ENCODE measurements at regions of chr2 and their contacts with region 1.

Region 1: GRCh38 chr2:54052825-54053718 is 62.3 kb upstream of the ACYP2 start:
- DNase-seq: peak; percentile 42
- H3K4me3 ChIP-seq: no peak overlapping the region
- H3K27ac ChIP-seq: no peak overlapping the region
- H3K4me1 ChIP-seq: peaks cover 8% of the 10 kb centered on the region
- H3K27me3 ChIP-seq: no peaks in the 10 kb centered on the region
- CTCF ChIP-seq: peak; percentile 36 to 45

Region 2: GRCh38 chr2:53786705-53787612 is 266.1 kb before region 1 on chr2 and contains the starts of genes ASB3 and ERLEC1:
- CTCF ChIA-PET with region 1: no interaction called
- dilution Hi-C with region 1: no loop called
- in situ Hi-C with region 1: no loop called
- intact Hi-C with region 1: loop called (anchors 10 kb)
- DNase-seq: peak; percentile 83
- H3K4me3 ChIP-seq: peak within 1 kb of the TSS; percentile 84 to 94 (median 84)
- H3K27ac ChIP-seq: peak within 1 kb of the TSS; percentile 48
- H3K4me1 ChIP-seq: peaks cover 21% of the 10 kb centered on the region
- H3K27me3 ChIP-seq: no peaks in the 10 kb centered on the region
- CTCF ChIP-seq: peak in 1 of 2 donors; percentile 5
- total RNA-seq, gene ASB3: 18.2 to 22.0 TPM
- total RNA-seq, gene ERLEC1: 34.2 to 53.7 TPM

Region 3: DNA sequence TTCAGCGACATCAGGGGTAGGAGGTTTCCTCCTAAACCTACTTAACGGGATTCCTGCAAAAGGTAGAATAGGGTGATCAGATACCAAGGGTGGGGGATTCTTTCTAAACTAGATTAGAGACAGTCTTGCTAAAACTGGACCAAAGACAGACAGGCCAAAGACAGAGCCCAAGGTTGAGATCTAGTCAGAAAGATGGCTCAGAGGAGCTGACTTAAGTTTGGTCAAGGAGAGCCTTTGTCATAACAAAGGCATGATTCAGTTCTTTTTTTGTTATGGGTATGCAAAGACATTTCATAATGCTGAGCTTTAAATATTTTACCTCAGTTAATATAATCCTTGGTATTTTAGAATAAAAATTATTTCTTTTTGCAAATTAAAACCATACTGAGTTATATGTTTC is 175.5 kb before region 1 on chr2:
- CTCF ChIA-PET with region 1: no interaction called
- dilution Hi-C with region 1: no loop called
- in situ Hi-C with region 1: no loop called
- intact Hi-C with region 1: no loop called
- DNase-seq: peak; percentile 8
- H3K4me3 ChIP-seq: no peak overlapping the region
- H3K27ac ChIP-seq: no peak overlapping the region
- H3K4me1 ChIP-seq: no peaks in the 10 kb centered on the region
- H3K27me3 ChIP-seq: no peaks in the 10 kb centered on the region
- CTCF ChIP-seq: no peak

Region 4: DNA sequence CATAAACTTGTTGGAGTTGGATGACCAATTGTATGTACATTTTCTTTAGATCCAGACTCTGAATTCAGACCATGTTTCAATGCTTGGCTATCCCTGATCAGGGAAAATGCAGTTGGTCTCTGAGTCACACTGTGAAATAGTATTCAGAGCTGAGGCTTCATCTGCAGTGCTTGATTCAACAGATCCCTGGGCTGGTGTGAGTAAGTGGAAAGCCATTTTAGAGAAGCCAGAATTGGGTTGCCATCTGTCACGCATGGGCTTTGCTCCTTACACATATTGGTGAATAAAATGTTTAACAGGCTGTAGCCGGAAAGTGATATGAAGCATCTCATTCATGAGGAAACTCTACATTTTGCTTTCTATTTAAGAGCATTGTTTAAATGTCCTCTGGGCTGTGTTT is 12.3 kb after region 1 on chr2:
- CTCF ChIA-PET with region 1: no interaction called
- dilution Hi-C with region 1: no loop called
- in situ Hi-C with region 1: no loop called
- intact Hi-C with region 1: loop called (anchors 2 kb)
- DNase-seq: peak; percentile 96
- H3K4me3 ChIP-seq: no peak overlapping the region
- H3K27ac ChIP-seq: peak overlapping the region; percentile 77
- H3K4me1 ChIP-seq: peaks cover 42% of the 10 kb centered on the region
- H3K27me3 ChIP-seq: no peaks in the 10 kb centered on the region
- CTCF ChIP-seq: no peak

Measured in mammary epithelial cell (primary cell).